Common myeloid progenitor, CD34-positive (primary cell): ENCODE measurements at regions of chr19 and their contacts with region 1.

Region 1: DNA sequence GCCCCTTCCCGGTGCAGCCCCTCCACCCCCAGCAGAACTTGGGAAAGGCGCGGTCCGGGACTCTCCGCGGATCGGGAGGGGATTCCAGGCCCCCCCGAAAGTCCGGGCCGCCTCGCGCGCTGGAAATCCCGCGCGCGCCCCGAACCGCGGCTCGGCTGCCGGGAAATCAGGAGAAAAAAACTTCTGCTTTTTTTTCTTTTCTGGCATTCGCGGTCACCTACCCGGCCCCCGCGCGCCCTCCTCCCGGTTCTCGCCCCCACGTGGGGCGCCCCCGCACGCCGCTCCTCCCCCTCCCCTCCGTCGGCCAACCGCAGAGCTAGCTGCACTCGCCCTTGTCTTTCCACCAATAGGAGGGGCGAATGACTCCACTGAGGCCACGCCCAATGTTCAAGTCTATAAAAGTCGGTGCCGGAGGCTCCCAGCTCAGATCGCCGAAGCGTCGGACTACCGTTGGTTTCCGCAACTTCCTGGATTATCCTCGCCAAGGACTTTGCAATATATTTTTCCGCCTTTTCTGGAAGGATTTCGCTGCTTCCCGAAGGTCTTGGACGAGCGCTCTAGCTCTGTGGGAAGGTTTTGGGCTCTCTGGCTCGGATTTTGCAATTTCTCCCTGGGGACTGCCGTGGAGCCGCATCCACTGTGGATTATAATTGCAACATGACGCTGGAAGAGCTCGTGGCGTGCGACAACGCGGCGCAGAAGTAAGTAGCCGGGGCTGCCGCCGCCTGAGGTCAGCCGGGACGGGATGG is at the start of gene GADD45B:
- DNase-seq: peak; percentile 97 to 98 (median 97)
- H3K4me3 ChIP-seq: peak within 1 kb of the TSS; percentile 75 to 99 (median 91)
- H3K27ac ChIP-seq: peak within 1 kb of the TSS in 1 of 2 experiments; percentile 80
- H3K4me1 ChIP-seq: peaks cover 2 to 58% (median 51%) of the 10 kb centered on the region in 4 experiments
- H3K27me3 ChIP-seq: no peaks in the 10 kb centered on the region

Region 2: DNA sequence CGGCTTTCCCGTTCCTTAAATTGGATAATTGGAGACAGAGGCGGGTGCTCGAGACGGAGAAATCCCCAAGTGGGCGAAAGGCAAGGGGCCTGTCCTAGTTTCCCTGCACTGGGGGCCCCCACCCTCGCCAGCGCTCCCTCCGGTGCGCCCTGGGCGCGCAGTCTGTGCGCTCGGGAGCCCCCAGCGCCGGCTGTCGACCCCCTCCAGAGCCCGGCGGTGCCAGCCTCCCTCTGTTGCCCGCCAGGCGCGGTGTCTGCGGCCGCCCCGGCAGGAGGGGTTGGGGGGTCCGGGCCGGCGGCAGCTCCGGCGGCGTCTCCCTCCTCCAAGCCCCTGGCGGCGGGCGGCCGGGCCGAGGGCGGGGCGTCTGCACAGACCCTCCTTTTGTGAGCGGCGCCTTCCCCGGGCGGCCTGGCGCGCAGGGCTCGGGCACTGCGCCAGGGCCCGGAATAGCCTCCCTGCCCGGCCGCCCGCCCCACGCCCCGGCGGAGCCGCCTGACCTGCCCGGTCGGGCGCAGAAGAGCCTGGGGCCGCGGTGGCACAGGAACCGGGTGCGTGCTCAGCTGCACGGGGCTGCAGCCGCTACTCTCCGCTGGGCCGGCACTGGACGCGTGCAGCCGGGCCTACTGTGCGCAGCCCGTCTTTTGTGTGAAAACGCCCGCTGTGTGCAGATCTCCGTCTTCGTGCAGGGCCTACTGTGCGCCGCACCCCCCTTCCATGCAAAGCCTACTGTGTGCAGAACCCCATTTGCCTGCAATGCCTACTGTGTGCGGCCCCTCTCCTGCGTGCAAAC is 13.3 kb after region 1 on chr19:
- CTCF ChIA-PET with region 1: interaction called, 7 read pairs
- POLR2A ChIA-PET with region 1: interaction called, 21 read pairs
- DNase-seq: peak in 1 of 3 donors; percentile 64
- H3K4me3 ChIP-seq: peak overlapping the region in 6 of 7 experiments; percentile 8 to 63 (median 31)
- H3K27ac ChIP-seq: no peak overlapping the region
- H3K4me1 ChIP-seq: peaks cover 0 to 47% (median 44%) of the 10 kb centered on the region in 4 experiments
- H3K27me3 ChIP-seq: peaks cover 0 to 31% (median 9%) of the 10 kb centered on the region in 5 experiments

Region 3: GRCh38 chr19:2543463-2544442 is 67.9 kb after region 1 on chr19:
- CTCF ChIA-PET with region 1: interaction called, 11 read pairs
- POLR2A ChIA-PET with region 1: interaction called, 15 read pairs
- DNase-seq: peak; percentile 54 to 80 (median 72)
- H3K4me3 ChIP-seq: peak overlapping the region in 6 of 7 experiments; percentile 5 to 64 (median 28)
- H3K27ac ChIP-seq: no peak overlapping the region
- H3K4me1 ChIP-seq: peaks cover 0 to 49% (median 31%) of the 10 kb centered on the region in 4 experiments
- H3K27me3 ChIP-seq: no peaks in the 10 kb centered on the region

Region 4: DNA sequence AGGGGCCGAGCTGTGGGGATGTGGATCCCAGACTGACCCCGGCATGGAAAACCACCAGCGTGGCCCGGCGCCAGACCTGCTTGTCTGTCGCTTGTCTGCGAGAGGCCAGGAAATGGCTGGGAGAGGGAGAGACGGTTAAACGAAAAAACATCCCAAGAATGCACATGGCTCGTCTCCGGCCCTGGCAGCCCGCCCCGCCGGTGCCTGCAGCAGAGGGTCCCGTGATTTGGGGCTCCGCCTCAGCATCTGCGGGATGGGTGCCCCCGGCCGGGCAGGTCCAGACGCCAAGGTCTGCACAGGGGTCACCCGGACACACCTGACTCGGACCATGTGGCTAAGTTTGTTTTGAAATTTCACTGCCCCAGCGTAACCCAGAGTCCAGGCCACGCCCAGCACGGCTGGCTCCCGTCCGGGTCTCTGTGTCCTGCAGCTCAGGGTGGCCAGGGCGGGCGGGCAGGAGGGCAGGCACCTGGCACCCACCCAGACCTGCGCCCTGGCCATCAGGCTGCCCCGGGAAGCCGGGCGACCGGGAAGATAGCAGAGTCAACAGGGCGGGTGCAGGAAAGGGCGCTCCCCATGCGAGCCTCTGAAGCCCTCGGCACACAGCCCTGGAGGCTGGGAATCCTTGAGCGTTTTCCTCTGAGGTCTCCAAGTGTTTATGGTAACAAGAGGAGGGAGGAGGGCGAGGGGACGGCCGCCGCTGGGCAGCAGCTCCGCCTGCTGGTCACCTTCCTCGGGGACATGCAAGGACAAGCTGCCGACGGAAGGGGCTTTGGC is 103.2 kb after region 1 on chr19:
- CTCF ChIA-PET with region 1: interaction called, 29 read pairs
- POLR2A ChIA-PET with region 1: interaction called, 20 read pairs
- DNase-seq: peak; percentile 72 to 81 (median 80)
- H3K4me3 ChIP-seq: peak overlapping the region in 6 of 7 experiments; percentile 6 to 75 (median 62)
- H3K27ac ChIP-seq: no peak overlapping the region
- H3K4me1 ChIP-seq: peaks cover 0 to 16% (median 14%) of the 10 kb centered on the region in 4 experiments
- H3K27me3 ChIP-seq: no peaks in the 10 kb centered on the region

Region 5: GRCh38 chr19:2618611-2619010 is 142.7 kb after region 1 on chr19:
- CTCF ChIA-PET with region 1: interaction called, 8 read pairs
- POLR2A ChIA-PET with region 1: interaction called, 12 read pairs
- DNase-seq: peak; percentile 82 to 97 (median 94)
- H3K4me3 ChIP-seq: peak overlapping the region in 5 of 7 experiments; percentile 22 to 65 (median 49)
- H3K27ac ChIP-seq: peak overlapping the region; percentile 87 to 95
- H3K4me1 ChIP-seq: peaks cover 8 to 84% (median 76%) of the 10 kb centered on the region in 4 experiments
- H3K27me3 ChIP-seq: no peaks in the 10 kb centered on the region